Astrocyte of the cerebellum (primary cell): ENCODE measurements at regions of chr1 and their contacts with region 1.

Region 1: DNA sequence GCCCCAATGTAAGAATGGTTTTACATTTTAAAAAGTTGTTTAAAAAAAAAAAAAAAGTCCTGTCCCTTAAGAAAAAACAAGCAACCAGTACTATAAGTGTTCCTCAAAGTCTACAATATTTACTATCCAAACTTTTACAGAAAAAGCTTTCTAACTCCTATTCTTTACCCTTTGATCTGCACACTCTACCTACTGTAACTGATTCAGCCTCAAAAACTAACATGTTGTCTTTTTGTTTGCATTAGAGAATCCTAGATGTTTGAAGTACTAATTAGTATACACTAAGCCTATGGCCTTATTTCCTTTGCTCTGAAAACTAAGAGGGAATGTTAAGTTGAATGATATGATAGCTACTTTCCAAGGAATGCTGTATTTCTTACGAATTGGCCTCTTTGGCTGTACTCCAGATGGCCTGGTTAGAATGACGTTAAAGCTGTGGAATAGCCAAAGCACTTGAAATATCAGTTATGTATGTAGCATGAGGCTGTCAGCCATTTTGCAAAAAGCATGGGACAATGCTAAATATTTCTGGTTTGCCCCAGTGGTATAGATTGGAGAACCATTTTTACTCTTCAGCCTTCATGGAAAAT is 234.8 kb downstream of the GPR52 start:
- DNase-seq: peak; percentile 57
- H3K4me3 ChIP-seq: no peak overlapping the region
- CTCF ChIP-seq: no peak

Region 2: DNA sequence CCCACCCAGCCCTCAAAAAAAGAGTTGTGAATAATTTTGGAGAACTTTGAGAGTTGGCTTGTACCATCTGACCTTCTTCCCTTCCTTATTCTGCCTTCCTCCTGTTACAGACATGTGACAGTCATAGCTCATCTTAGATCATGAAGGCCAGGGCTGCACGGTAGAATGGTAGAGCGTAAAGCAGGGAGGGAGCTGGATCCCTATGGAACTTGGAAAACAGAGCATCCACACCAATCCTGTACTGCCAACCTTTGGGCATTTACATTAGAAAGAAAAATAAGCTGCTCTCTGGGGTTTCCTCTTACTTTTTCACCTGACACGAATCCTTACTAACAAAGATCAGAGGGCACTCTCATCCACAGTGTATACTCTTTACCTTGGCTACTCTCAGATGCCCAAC is 113.3 kb before region 1 on chr1:
- in situ Hi-C with region 1: loop called (anchors 10 kb)
- DNase-seq: no peak
- H3K4me3 ChIP-seq: no peak overlapping the region
- CTCF ChIP-seq: no peak

Region 3: GRCh38 chr1:174580801-174581200 is 101.7 kb before region 1 on chr1:
- in situ Hi-C with region 1: no loop called
- DNase-seq: no peak
- H3K4me3 ChIP-seq: no peak overlapping the region
- CTCF ChIP-seq: no peak